Endothelial cell of umbilical vein (primary cell): ENCODE measurements at regions of chr12 and their contacts with region 1.

Region 1: DNA sequence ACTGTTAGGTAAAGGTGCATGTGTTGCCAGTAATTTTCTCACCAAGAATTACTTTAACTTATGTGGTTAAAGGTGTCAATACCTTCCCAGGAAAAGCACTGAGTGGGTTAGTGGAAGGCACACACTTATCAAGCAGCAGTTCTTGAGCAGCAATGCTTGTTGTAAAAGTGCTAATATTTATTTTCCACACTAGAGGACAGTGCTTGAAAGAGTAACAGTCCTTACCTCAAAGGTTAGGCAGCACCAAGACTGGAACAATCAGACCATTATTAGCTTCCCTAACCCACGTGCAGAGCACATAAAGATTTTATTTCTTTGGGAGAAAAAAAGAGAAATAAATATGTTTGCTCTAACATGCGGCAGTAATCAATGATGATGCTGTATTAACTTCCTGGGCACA is 48.8 kb upstream of the KRR1 start:
- DNase-seq: peak; percentile 70
- H3K4me3 ChIP-seq: no peak overlapping the region
- H3K27ac ChIP-seq: no peak overlapping the region
- H3K4me1 ChIP-seq: peaks cover 12% of the 10 kb centered on the region
- H3K27me3 ChIP-seq: no peaks in the 10 kb centered on the region
- CTCF ChIP-seq: peak in 1 of 2 donors; percentile 40
- POLR2A ChIP-seq: no peak

Region 2: GRCh38 chr12:75611041-75611440 is 50.9 kb after region 1 on chr12:
- CTCF ChIA-PET with region 1: no interaction called
- POLR2A ChIA-PET with region 1: no interaction called
- dilution Hi-C with region 1: no loop called
- intact Hi-C with region 1: no loop called
- DNase-seq: no peak
- H3K4me3 ChIP-seq: no peak overlapping the region
- H3K27ac ChIP-seq: no peak overlapping the region
- H3K4me1 ChIP-seq: no peaks in the 10 kb centered on the region
- H3K27me3 ChIP-seq: no peaks in the 10 kb centered on the region
- CTCF ChIP-seq: no peak
- POLR2A ChIP-seq: no peak

Region 3: GRCh38 chr12:75722714-75723200 is 162.6 kb after region 1 on chr12:
- CTCF ChIA-PET with region 1: interaction called, 3 read pairs
- POLR2A ChIA-PET with region 1: no interaction called
- dilution Hi-C with region 1: no loop called
- intact Hi-C with region 1: loop called (anchors 1 kb)
- DNase-seq: peak; percentile 95
- H3K4me3 ChIP-seq: no peak overlapping the region
- H3K27ac ChIP-seq: peak overlapping the region; percentile 92
- H3K4me1 ChIP-seq: peaks cover 46% of the 10 kb centered on the region
- H3K27me3 ChIP-seq: no peaks in the 10 kb centered on the region
- CTCF ChIP-seq: no peak
- POLR2A ChIP-seq: no peak

Region 4: GRCh38 chr12:75814851-75815754 is 254.9 kb after region 1 on chr12:
- CTCF ChIA-PET with region 1: interaction called, 3 read pairs
- POLR2A ChIA-PET with region 1: no interaction called
- dilution Hi-C with region 1: no loop called
- intact Hi-C with region 1: loop called (anchors 1 kb)
- DNase-seq: peak; percentile 95
- H3K4me3 ChIP-seq: no peak overlapping the region
- H3K27ac ChIP-seq: peak overlapping the region; percentile 19
- H3K4me1 ChIP-seq: peaks cover 10% of the 10 kb centered on the region
- H3K27me3 ChIP-seq: no peaks in the 10 kb centered on the region
- CTCF ChIP-seq: no peak
- POLR2A ChIP-seq: no peak

Region 5: GRCh38 chr12:75862692-75863471 is 302.7 kb after region 1 on chr12:
- CTCF ChIA-PET with region 1: no interaction called
- POLR2A ChIA-PET with region 1: no interaction called
- dilution Hi-C with region 1: no loop called
- intact Hi-C with region 1: loop called (anchors 5 kb)
- DNase-seq: peak; percentile 84
- H3K4me3 ChIP-seq: no peak overlapping the region
- H3K27ac ChIP-seq: peak overlapping the region; percentile 76
- H3K4me1 ChIP-seq: peaks cover 38% of the 10 kb centered on the region
- H3K27me3 ChIP-seq: no peaks in the 10 kb centered on the region
- CTCF ChIP-seq: no peak
- POLR2A ChIP-seq: no peak